Activated CD4-positive, alpha-beta T cell treated with anti-CD3 and anti-CD28 coated beads for 36 hours (primary cell): ENCODE measurements at regions of chr9 and their contacts with region 1.

Region 1: GRCh38 chr9:115013998-115014397 is 83.6 kb upstream of the TNFSF8 start:
- DNase-seq: peak; percentile 89
- ATAC-seq: peak; percentile 89
- H3K4me3 Mint-ChIP-seq: no peak overlapping the region
- H3K27ac Mint-ChIP-seq: peak overlapping the region; percentile 58
- H3K4me1 Mint-ChIP-seq: peaks cover 46% of the 10 kb centered on the region
- H3K27me3 Mint-ChIP-seq: no peaks in the 10 kb centered on the region

Region 2: DNA sequence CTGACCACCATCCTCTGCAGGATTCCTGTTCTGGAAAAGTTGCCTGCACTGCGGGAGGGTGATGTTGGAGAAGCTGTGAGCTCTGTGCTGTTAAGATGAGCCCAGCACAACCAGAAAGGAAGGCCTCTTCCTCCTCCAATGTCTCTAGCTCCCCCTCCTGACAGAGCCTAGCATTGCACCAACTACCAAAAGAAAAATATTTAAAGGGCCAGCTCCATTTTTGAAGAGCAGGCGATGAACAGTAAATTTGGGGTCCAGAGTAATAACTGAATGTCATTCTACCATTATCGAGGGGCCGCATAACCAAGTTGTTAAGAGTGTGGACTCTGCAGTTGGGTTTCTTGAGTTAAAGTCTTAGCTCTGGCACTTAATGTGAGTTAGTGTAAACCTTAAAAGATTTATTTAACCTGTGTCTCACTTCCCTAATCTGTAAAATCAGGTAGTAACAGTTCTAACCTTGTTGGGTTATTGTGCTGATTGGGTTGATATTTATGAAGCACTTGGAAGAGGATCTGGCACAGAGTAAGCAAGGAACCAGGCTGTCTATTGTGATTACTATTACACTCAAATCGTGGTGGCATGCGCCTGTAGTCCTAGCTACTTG is 360.3 kb before region 1 on chr9:
- CTCF ChIA-PET with region 1: interaction called, 13 read pairs
- POLR2A ChIA-PET with region 1: no interaction called
- intact Hi-C with region 1: no loop called
- DNase-seq: peak; percentile 89
- ATAC-seq: peak; percentile 83
- H3K4me3 Mint-ChIP-seq: no peak overlapping the region
- H3K27ac Mint-ChIP-seq: peak overlapping the region; percentile 14
- H3K4me1 Mint-ChIP-seq: peaks cover 26% of the 10 kb centered on the region
- H3K27me3 Mint-ChIP-seq: no peaks in the 10 kb centered on the region

Region 3: DNA sequence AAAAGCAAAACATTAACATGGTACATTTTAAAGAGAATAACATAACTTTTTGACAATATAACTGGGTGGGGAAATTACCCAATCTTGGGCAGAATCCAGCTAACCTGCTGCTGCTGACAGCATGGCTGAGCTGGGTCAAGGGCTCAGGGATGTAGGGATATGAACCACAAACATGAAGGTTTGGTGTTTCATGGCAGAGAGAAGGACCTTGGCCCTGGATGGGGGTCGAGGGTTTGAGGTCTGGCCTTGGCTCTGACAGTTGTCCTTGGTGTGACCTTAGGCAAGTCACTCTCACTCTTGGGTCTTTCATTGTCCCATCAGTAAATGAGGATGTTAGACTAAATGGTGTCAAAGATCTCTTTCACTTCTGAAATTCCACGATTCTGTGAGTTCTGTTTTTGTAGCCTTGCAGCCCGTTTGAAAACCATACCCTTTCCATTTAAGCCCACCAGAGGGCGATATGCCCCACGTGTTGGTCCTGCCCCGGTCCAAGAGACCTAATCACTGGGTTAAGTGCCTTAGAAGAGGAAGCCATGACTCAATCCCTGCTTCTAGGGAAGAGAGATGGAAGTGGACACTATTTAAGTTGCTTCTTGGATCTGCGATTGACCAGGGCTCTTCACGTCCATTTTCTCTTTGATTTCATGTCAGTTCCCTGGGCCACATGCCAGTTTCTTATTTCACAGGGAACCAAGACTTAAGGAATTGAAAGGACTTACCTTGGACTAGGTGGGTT is 275.2 kb before region 1 on chr9:
- CTCF ChIA-PET with region 1: interaction called, 20 read pairs
- POLR2A ChIA-PET with region 1: interaction called, 3 read pairs
- intact Hi-C with region 1: loop called (anchors 1 kb)
- DNase-seq: peak; percentile 80
- ATAC-seq: peak; percentile 70
- H3K4me3 Mint-ChIP-seq: no peak overlapping the region
- H3K27ac Mint-ChIP-seq: peak overlapping the region; percentile 84
- H3K4me1 Mint-ChIP-seq: peaks cover 56% of the 10 kb centered on the region
- H3K27me3 Mint-ChIP-seq: no peaks in the 10 kb centered on the region

Region 4: GRCh38 chr9:114906908-114907571 is 107.0 kb before region 1 on chr9:
- CTCF ChIA-PET with region 1: interaction called, 34 read pairs
- POLR2A ChIA-PET with region 1: interaction called, 3 read pairs
- intact Hi-C with region 1: loop called (anchors 1 to 2 kb)
- DNase-seq: peak; percentile 49
- ATAC-seq: peak; percentile 23
- H3K4me3 Mint-ChIP-seq: no peak overlapping the region
- H3K27ac Mint-ChIP-seq: peak overlapping the region; percentile 86
- H3K4me1 Mint-ChIP-seq: peaks cover 58% of the 10 kb centered on the region
- H3K27me3 Mint-ChIP-seq: no peaks in the 10 kb centered on the region

Region 5: DNA sequence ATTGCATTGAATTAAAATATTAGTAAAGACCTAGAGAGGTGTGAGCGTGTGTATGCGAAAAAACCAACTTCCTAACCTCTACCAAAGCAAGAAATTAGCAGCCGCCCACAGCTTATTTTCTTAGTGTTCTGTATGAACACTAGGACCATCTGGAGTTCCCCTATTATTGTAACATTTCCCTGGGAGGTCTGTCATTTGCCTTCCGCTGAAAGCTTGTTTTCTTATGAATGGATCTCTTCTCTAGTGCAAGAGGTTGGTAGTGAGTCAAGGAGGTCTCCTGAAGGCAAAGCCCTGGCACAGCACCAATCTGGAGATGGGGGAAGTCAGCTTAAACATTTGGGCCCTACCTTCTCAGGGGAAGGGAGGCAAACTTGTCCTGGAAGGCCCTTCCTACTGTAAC is 94.4 kb before region 1 on chr9:
- CTCF ChIA-PET with region 1: interaction called, 15 read pairs
- POLR2A ChIA-PET with region 1: no interaction called
- intact Hi-C with region 1: no loop called
- DNase-seq: peak; percentile 55
- ATAC-seq: peak; percentile 86
- H3K4me3 Mint-ChIP-seq: peak overlapping the region; percentile 3
- H3K27ac Mint-ChIP-seq: peak overlapping the region; percentile 69
- H3K4me1 Mint-ChIP-seq: peaks cover 90% of the 10 kb centered on the region
- H3K27me3 Mint-ChIP-seq: no peaks in the 10 kb centered on the region

Region 6: DNA sequence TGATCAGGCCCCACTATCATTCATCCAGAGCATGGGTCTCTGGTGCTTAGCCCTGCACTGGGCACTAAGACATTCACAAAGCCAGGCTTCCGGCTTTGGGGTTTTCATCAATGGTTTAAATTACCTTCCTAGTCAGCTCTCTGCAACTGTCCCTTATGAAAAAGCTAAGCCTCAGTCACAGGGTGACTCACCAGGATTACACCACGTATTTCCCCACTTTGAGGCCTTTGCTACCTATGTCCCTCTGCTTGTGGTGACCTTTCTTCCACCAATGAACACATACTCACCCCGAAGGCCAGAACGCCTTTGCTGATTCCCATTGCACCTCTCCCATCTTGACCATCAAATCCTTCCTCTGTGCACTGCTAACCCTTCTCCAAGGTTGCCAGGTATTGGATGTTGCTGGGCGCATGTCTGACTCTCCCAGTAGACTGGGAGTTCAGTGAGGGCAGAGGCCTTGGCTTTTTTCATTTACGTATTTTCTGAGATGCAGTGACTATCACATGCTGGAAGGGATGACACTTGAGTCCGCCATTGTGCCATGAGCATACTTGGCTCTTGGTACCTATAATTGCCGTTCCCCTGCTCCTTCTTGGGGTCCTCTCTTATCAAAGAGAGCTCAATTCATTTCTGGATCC is 24.9 kb before region 1 on chr9:
- CTCF ChIA-PET with region 1: interaction called, 18 read pairs
- POLR2A ChIA-PET with region 1: interaction called, 10 read pairs
- intact Hi-C with region 1: no loop called
- DNase-seq: peak; percentile 64
- ATAC-seq: peak; percentile 63
- H3K4me3 Mint-ChIP-seq: peak overlapping the region; percentile 19
- H3K27ac Mint-ChIP-seq: peak overlapping the region; percentile 95
- H3K4me1 Mint-ChIP-seq: peaks cover 68% of the 10 kb centered on the region
- H3K27me3 Mint-ChIP-seq: no peaks in the 10 kb centered on the region